CD14-positive monocyte (primary cell): ENCODE measurements at regions of chr11 and their contacts with region 1.

Region 1: GRCh38 chr11:13335319-13335718 is 57.7 kb downstream of the BMAL1 start:
- DNase-seq: peak; percentile 48 to 58 (median 54)
- H3K4me3 ChIP-seq: no peak overlapping the region
- H3K4me3 Mint-ChIP-seq: no peak overlapping the region
- H3K27ac ChIP-seq: no peak overlapping the region
- H3K27ac Mint-ChIP-seq: no peak overlapping the region
- H3K4me1 ChIP-seq: peaks cover 16 to 32% of the 10 kb centered on the region in 2 donors
- H3K4me1 Mint-ChIP-seq: peaks cover 55% of the 10 kb centered on the region
- H3K27me3 ChIP-seq: no peaks in the 10 kb centered on the region
- H3K27me3 Mint-ChIP-seq: peaks cover 0 to 1% (median 1%) of the 10 kb centered on the region in 3 donors
- CTCF ChIP-seq: peak; percentile 89

Region 2: GRCh38 chr11:13183094-13183825 is 152.1 kb before region 1 on chr11:
- intact Hi-C with region 1: loop called (anchors 10 kb)
- DNase-seq: peak; percentile 3 to 21 (median 7)
- H3K4me3 ChIP-seq: peak overlapping the region in 1 of 3 experiments; percentile 18
- H3K4me3 Mint-ChIP-seq: peak overlapping the region in 1 of 2 donors; percentile 41
- H3K27ac ChIP-seq: no peak overlapping the region
- H3K27ac Mint-ChIP-seq: no peak overlapping the region
- H3K4me1 ChIP-seq: peaks cover 9% of the 10 kb centered on the region in 2 donors
- H3K4me1 Mint-ChIP-seq: peaks cover 7% of the 10 kb centered on the region
- H3K27me3 ChIP-seq: no peaks in the 10 kb centered on the region
- H3K27me3 Mint-ChIP-seq: peaks cover 3 to 4% (median 3%) of the 10 kb centered on the region in 3 donors
- CTCF ChIP-seq: peak; percentile 45

Region 3: GRCh38 chr11:13210424-13210823 is 124.9 kb before region 1 on chr11:
- intact Hi-C with region 1: loop called in 1 of 2 experiments (anchors 10 kb)
- DNase-seq: peak in 1 of 3 donors; percentile 10
- H3K4me3 ChIP-seq: no peak overlapping the region
- H3K4me3 Mint-ChIP-seq: no peak overlapping the region
- H3K27ac ChIP-seq: no peak overlapping the region
- H3K27ac Mint-ChIP-seq: no peak overlapping the region
- H3K4me1 ChIP-seq: peaks cover 25 to 29% of the 10 kb centered on the region in 2 donors
- H3K4me1 Mint-ChIP-seq: peaks cover 34% of the 10 kb centered on the region
- H3K27me3 ChIP-seq: no peaks in the 10 kb centered on the region
- H3K27me3 Mint-ChIP-seq: peaks cover 0 to 1% (median 0%) of the 10 kb centered on the region in 3 donors
- CTCF ChIP-seq: peak; percentile 45

Region 4: DNA sequence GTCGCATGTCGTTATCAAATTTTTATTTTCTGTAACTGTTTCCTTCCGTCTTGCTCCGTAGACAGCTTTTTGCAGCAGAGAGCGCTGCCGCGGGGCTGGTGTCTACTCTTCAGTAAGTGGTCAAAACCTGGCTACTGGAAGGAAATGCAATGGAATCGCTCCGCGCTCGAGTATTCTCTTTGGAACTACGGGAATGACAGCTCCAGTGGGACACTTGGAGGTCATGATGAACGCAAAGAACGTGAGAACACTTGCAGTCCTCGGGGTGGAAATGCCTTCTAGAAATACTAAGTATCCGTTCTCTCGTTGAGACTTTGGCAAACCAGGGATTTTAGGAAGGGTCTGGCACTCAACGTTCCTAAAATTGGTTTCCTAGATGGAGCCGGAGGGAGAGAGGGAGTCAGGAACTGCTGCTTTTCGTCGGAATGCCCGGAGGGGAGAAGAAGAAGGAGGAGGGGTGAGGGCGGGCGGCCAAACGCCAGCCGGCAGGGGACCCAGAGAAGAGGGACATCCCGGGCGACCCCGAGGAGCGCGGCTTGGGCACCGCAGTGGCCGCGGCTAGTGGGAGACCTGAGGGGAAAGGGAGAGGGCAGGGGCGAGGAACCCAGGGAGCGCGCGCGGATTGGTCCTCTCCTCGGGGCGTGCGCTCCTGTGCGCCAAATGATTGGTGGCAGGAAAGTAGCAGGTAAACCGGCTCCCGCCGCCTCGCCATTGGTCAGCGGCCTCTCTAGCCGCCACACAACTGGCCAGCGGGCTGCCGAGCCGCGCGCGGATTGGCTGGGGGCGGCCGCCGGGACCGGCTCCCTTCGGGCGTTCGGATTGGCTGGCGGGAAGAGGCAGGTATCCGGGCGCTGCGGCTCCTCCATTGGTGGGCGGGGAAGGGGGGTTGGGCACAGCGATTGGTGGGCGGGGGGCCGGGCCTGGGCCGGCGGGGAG is 58.2 kb before region 1 on chr11:
- intact Hi-C with region 1: loop called in 1 of 2 experiments (anchors 2 kb)
- DNase-seq: peak; percentile 95 to 98 (median 97)
- H3K4me3 ChIP-seq: peak overlapping the region; percentile 62 to 85 (median 80)
- H3K4me3 Mint-ChIP-seq: peak overlapping the region; percentile 98 to 99
- H3K27ac ChIP-seq: peak overlapping the region in 1 of 2 donors; percentile 86
- H3K27ac Mint-ChIP-seq: peak overlapping the region; percentile 31 to 85 (median 68)
- H3K4me1 ChIP-seq: peaks cover 28 to 41% of the 10 kb centered on the region in 2 donors
- H3K4me1 Mint-ChIP-seq: peaks cover 44% of the 10 kb centered on the region
- H3K27me3 ChIP-seq: peaks cover 33 to 53% of the 10 kb centered on the region in 2 donors
- H3K27me3 Mint-ChIP-seq: peaks cover 56 to 68% (median 64%) of the 10 kb centered on the region in 3 donors
- CTCF ChIP-seq: no peak

Region 5: DNA sequence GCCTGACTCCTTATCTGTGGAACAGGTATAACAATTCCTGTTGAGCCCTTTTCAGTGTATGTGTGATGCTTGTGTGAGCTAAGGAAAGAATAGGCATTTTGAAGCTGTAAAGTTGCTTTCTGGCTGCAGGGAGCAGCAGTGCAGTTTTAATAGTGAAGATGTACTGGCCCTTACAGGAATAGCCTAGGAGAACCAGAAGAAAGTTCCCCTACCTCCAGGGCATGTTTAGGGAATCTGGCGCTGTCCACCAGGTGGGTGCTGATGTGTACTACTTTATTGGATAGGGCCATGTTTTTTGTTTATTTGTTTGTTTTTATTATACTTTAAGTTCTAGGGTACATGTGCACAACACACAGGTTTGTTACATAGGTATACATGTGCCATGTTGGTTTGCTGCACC is 46.2 kb before region 1 on chr11:
- intact Hi-C with region 1: no loop called
- DNase-seq: no peak
- H3K4me3 ChIP-seq: no peak overlapping the region
- H3K4me3 Mint-ChIP-seq: no peak overlapping the region
- H3K27ac ChIP-seq: no peak overlapping the region
- H3K27ac Mint-ChIP-seq: no peak overlapping the region
- H3K4me1 ChIP-seq: peaks cover 18 to 22% of the 10 kb centered on the region in 2 donors
- H3K4me1 Mint-ChIP-seq: peaks cover 41% of the 10 kb centered on the region
- H3K27me3 ChIP-seq: no peaks in the 10 kb centered on the region
- H3K27me3 Mint-ChIP-seq: peaks cover 0 to 2% (median 2%) of the 10 kb centered on the region in 3 donors
- CTCF ChIP-seq: no peak